Naive thymus-derived CD4-positive, alpha-beta T cell (primary cell): ENCODE measurements at regions of chr11 and their contacts with region 1.

Region 1: GRCh38 chr11:34051349-34052035 is at the start of gene CAPRIN1:
- DNase-seq: peak; percentile 78 to 92 (median 89)
- ATAC-seq: peak; percentile 87
- H3K4me3 ChIP-seq: peak within 1 kb of the TSS; percentile 95
- H3K4me3 Mint-ChIP-seq: peak within 1 kb of the TSS; percentile 94 to 99 (median 98)
- H3K27ac ChIP-seq: peak within 1 kb of the TSS; percentile 99
- H3K27ac Mint-ChIP-seq: peak within 1 kb of the TSS; percentile 94 to 99 (median 97)
- H3K4me1 ChIP-seq: peaks cover 21 to 27% of the 10 kb centered on the region in 2 donors
- H3K4me1 Mint-ChIP-seq: peaks cover 3 to 42% (median 30%) of the 10 kb centered on the region in 7 donors
- H3K27me3 ChIP-seq: no peaks in the 10 kb centered on the region
- H3K27me3 Mint-ChIP-seq: peaks cover 0 to 6% (median 0%) of the 10 kb centered on the region in 5 donors
- total RNA-seq, gene CAPRIN1: 120 to 227 (median 163) TPM

Region 2: DNA sequence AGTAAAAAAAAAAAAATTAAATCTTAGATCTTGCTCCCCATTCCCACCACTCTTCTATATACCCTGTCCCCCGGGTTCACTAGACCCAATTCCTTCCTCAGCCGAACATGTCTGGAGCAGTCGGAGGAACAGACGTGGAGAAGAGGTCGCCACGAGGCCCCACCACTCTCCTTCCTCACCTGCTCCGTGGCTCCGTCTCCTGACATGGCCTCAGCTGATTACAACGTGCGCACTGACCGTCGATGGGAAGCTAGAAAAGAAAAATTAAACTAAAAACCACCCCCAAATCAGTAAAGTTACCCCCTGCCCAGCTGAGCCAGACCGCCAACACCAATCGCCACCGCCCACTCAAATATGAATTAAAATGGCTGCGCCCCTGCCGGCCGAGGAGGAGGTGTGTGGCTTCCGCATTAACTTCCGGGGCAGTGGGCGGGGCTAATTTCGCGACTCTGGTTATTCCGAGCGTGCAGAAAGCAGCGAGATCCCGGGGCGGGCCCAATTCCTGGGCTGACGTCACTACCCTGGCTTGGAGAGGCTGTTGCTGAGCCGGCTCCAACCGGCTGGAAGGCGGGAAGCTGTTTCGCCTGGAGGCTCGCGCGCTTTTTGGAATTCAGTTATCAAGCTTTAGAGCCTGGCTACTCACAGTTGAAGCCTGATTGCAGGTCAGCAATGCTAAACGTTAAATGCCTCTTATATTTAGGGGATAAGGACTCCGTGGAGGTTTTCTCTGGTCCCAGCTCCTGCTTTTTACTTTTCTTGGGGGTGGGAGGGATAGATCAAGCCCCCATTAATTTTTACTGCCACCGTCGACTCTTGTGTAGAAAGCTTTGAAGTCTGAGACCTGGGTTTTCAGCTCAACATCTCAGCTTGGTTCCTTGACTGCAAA is 890.1 kb before region 1 on chr11 and contains the start of gene CSTF3:
- CTCF ChIA-PET with region 1: no interaction called
- POLR2A ChIA-PET with region 1: no interaction called
- intact Hi-C with region 1: loop called in 1 of 2 experiments (anchors 1 kb)
- DNase-seq: peak; percentile 84 to 95 (median 89)
- ATAC-seq: peak; percentile 98
- H3K4me3 ChIP-seq: peak within 1 kb of the TSS; percentile 97
- H3K4me3 Mint-ChIP-seq: peak within 1 kb of the TSS; percentile 95 to 100 (median 100)
- H3K27ac ChIP-seq: peak within 1 kb of the TSS; percentile 84
- H3K27ac Mint-ChIP-seq: peak within 1 kb of the TSS; percentile 95 to 100 (median 99)
- H3K4me1 ChIP-seq: peaks cover 11 to 19% of the 10 kb centered on the region in 2 donors
- H3K4me1 Mint-ChIP-seq: peaks cover 40 to 64% (median 55%) of the 10 kb centered on the region in 7 donors
- H3K27me3 ChIP-seq: no peaks in the 10 kb centered on the region
- H3K27me3 Mint-ChIP-seq: no peaks in the 10 kb centered on the region
- total RNA-seq, gene CSTF3: 14.6 to 38.6 (median 28.7) TPM

Region 3: DNA sequence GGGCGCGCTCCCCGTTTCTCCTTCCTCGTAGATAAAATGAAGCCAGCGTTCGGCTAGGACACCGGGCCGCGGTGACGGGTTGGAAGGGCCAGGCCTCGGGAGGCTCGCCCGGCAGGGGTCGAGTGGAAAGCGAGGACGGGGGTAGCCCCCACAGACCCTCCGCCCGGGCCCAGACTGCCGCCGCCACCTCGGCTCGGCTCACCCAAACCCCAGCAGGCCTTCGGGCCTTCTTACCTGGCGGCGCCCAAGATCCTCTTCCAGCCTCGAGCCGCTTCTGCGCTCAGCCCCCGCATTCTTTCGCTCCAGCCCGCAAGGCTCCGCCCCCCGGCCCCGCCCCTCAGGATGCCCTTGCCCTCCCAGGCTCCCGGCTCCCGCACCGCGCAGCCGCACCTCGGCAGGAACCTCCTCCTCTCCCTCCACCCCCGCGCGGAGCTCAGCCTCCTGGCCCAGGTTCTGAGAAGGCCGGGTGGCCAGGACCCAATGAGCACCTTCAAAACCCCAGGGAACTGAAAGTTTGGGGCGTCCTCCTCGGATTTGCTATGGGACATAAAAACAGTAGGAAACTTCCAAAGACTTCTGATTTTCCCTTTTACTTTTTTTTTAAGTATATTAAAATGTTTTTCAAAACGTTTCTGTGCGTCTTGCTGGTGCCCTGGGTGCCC is 315.2 kb before region 1 on chr11 and contains the start of gene CD59:
- CTCF ChIA-PET with region 1: no interaction called
- POLR2A ChIA-PET with region 1: no interaction called
- intact Hi-C with region 1: loop called in 1 of 2 experiments (anchors 1 kb)
- DNase-seq: peak; percentile 75 to 94 (median 85)
- ATAC-seq: peak; percentile 92
- H3K4me3 ChIP-seq: peak within 1 kb of the TSS; percentile 76
- H3K4me3 Mint-ChIP-seq: peak within 1 kb of the TSS; percentile 87 to 97 (median 92)
- H3K27ac ChIP-seq: peak within 1 kb of the TSS; percentile 72
- H3K27ac Mint-ChIP-seq: peak within 1 kb of the TSS; percentile 79 to 94 (median 86)
- H3K4me1 ChIP-seq: peaks cover 9 to 17% of the 10 kb centered on the region in 2 donors
- H3K4me1 Mint-ChIP-seq: peaks cover 21 to 41% (median 36%) of the 10 kb centered on the region in 7 donors
- H3K27me3 ChIP-seq: no peaks in the 10 kb centered on the region
- H3K27me3 Mint-ChIP-seq: peaks cover 0 to 11% (median 0%) of the 10 kb centered on the region in 5 donors
- total RNA-seq, gene CD59: 23.3 to 152 (median 62.7) TPM

Region 4: GRCh38 chr11:33996498-33997454 is 54.7 kb before region 1 on chr11:
- CTCF ChIA-PET with region 1: interaction called, 6 read pairs
- POLR2A ChIA-PET with region 1: no interaction called
- intact Hi-C with region 1: loop called (anchors 1 kb)
- DNase-seq: peak; percentile 42 to 79 (median 71)
- ATAC-seq: peak; percentile 99
- H3K4me3 ChIP-seq: no peak overlapping the region
- H3K4me3 Mint-ChIP-seq: peak overlapping the region in 7 of 10 donors; percentile 31 to 74 (median 59)
- H3K27ac ChIP-seq: no peak overlapping the region
- H3K27ac Mint-ChIP-seq: no peak overlapping the region
- H3K4me1 ChIP-seq: peaks cover 0 to 3% of the 10 kb centered on the region in 2 donors
- H3K4me1 Mint-ChIP-seq: peaks cover 0 to 10% (median 9%) of the 10 kb centered on the region in 7 donors
- H3K27me3 ChIP-seq: peaks cover 0 to 5% of the 10 kb centered on the region in 2 donors
- H3K27me3 Mint-ChIP-seq: peaks cover 12 to 33% (median 18%) of the 10 kb centered on the region in 5 donors

Region 5: GRCh38 chr11:34105079-34105956 is 53.8 kb after region 1 on chr11 and contains the start of gene NAT10:
- CTCF ChIA-PET with region 1: no interaction called
- POLR2A ChIA-PET with region 1: interaction called, 102 read pairs
- intact Hi-C with region 1: loop called (anchors 1 kb)
- DNase-seq: peak; percentile 84 to 98 (median 96)
- ATAC-seq: peak; percentile 97
- H3K4me3 ChIP-seq: peak within 1 kb of the TSS; percentile 91
- H3K4me3 Mint-ChIP-seq: peak within 1 kb of the TSS; percentile 89 to 100 (median 97)
- H3K27ac ChIP-seq: peak within 1 kb of the TSS; percentile 83
- H3K27ac Mint-ChIP-seq: peak within 1 kb of the TSS; percentile 97 to 99 (median 99)
- H3K4me1 ChIP-seq: peaks cover 18 to 21% of the 10 kb centered on the region in 2 donors
- H3K4me1 Mint-ChIP-seq: peaks cover 26 to 76% (median 64%) of the 10 kb centered on the region in 7 donors
- H3K27me3 ChIP-seq: no peaks in the 10 kb centered on the region
- H3K27me3 Mint-ChIP-seq: peaks cover 0 to 5% (median 0%) of the 10 kb centered on the region in 5 donors
- total RNA-seq, gene NAT10: 55.7 to 104 (median 84.3) TPM

Region 6: DNA sequence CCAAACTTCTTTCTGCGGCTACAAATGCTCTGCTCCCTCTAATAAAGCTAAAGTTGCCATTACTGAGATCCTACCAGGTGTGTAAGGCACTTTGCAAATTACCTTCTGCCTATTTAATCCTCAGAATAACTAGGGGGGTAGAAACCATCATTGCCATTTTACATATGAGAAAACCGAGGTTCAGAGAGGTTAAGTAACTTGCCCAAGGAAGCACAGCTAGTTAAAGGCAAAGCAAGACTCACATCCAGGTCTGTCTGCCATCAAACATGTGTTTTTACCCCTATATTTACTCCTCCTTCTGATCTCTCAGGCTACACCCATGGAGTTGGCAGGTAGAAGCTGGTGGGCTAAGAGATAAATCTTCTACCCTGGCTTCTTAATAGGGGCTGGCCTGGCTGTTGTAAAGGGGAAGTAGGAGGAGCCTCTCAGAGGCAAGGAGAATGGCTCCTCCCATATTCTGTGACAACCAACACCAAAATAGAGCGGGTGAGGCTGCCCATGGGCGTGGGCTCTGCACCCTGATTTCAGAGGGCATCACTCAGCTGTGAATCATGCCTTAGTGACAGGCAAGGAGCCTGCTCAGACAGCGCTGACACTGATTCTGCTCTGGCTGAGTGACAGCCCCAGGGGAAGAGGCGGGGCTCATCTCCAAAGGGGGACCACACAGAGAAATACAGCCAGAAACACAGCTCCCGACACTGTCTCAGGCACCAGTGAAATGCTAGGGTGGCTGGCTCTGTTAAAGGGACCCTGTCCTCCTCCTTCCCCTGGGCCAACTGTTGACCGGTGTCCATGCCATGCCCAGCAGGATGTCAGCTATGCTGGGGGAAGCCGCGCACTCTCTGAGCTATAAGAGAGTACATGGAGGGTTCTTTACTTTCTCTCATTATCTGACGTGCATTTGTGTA is 199.5 kb after region 1 on chr11:
- CTCF ChIA-PET with region 1: no interaction called
- POLR2A ChIA-PET with region 1: interaction called, 3 read pairs
- intact Hi-C with region 1: loop called in 1 of 2 experiments (anchors 1 kb)
- DNase-seq: peak; percentile 24 to 79 (median 58)
- ATAC-seq: peak; percentile 94
- H3K4me3 ChIP-seq: peak overlapping the region; percentile 40
- H3K4me3 Mint-ChIP-seq: peak overlapping the region; percentile 35 to 85 (median 78)
- H3K27ac ChIP-seq: no peak overlapping the region
- H3K27ac Mint-ChIP-seq: peak overlapping the region; percentile 12 to 79 (median 55)
- H3K4me1 ChIP-seq: peaks cover 36 to 51% of the 10 kb centered on the region in 2 donors
- H3K4me1 Mint-ChIP-seq: peaks cover 36 to 67% (median 58%) of the 10 kb centered on the region in 7 donors
- H3K27me3 ChIP-seq: no peaks in the 10 kb centered on the region
- H3K27me3 Mint-ChIP-seq: peaks cover 0 to 20% (median 0%) of the 10 kb centered on the region in 5 donors

Region 7: GRCh38 chr11:35662649-35663407 is 1611.3 kb after region 1 on chr11 and contains the start of gene TRIM44:
- CTCF ChIA-PET with region 1: no interaction called
- POLR2A ChIA-PET with region 1: no interaction called
- intact Hi-C with region 1: loop called in 1 of 2 experiments (anchors 2 kb)
- DNase-seq: peak; percentile 69 to 85 (median 82)
- ATAC-seq: peak; percentile 89
- H3K4me3 ChIP-seq: peak within 1 kb of the TSS; percentile 94
- H3K4me3 Mint-ChIP-seq: peak within 1 kb of the TSS; percentile 91 to 99 (median 95)
- H3K27ac ChIP-seq: peak within 1 kb of the TSS; percentile 94
- H3K27ac Mint-ChIP-seq: peak within 1 kb of the TSS; percentile 90 to 100 (median 96)
- H3K4me1 ChIP-seq: peaks cover 21 to 22% of the 10 kb centered on the region in 2 donors
- H3K4me1 Mint-ChIP-seq: peaks cover 24 to 61% (median 55%) of the 10 kb centered on the region in 7 donors
- H3K27me3 ChIP-seq: no peaks in the 10 kb centered on the region
- H3K27me3 Mint-ChIP-seq: peaks cover 0 to 22% (median 5%) of the 10 kb centered on the region in 5 donors
- total RNA-seq, gene TRIM44: 35.7 to 60.8 (median 58.6) TPM